Colonic mucosa (tissue), 4 donors: ENCODE measurements at regions of chr12 and their contacts with region 1.

Region 1: GRCh38 chr12:63802012-63802608 is 22.4 kb downstream of the RXYLT1 start:
- DNase-seq: no peak
- H3K4me3 ChIP-seq: no peak overlapping the region
- H3K27ac ChIP-seq: no peak overlapping the region
- H3K4me1 ChIP-seq: no peaks in the 10 kb centered on the region
- H3K27me3 ChIP-seq: no peaks in the 10 kb centered on the region
- CTCF ChIP-seq: peak; percentile 44

Region 2: DNA sequence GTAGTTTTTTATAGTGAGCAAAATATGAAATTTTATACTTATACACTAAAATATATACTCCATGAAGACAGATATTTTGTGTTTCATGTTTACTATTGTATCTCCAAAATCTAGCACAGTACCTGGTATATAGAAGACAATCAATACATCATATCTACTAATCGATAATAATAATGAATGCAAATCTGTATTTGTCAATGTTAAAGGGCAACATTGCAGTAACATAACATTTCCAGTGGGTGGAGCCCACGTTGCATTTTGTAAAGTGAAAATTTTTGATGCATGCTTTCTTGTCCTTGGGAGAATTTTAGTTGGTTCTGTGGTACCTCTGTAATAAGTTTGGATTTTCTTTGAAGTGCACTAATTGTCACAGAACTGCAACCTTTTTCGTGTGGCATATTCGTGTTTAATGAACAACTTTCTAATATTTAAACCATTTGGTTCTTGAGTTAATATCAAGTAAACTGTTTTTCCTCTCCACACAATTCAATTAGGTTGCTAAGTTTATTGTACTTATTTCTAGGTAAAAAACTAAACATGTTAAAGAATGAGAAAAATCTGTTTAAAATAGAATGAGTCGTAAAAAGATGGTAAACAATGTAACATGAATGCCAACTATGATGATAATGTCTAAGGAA is 698.5 kb before region 1 on chr12:
- intact Hi-C with region 1: loop called (anchors 10 kb)
- DNase-seq: no peak
- H3K4me3 ChIP-seq: no peak overlapping the region
- H3K27ac ChIP-seq: no peak overlapping the region
- H3K4me1 ChIP-seq: no peaks in the 10 kb centered on the region
- H3K27me3 ChIP-seq: no peaks in the 10 kb centered on the region
- CTCF ChIP-seq: peak; percentile 74

Region 3: GRCh38 chr12:63668028-63668799 is 133.9 kb before region 1 on chr12 and contains the start of gene DPY19L2:
- intact Hi-C with region 1: loop called (anchors 10 kb)
- DNase-seq: peak; percentile 69
- H3K4me3 ChIP-seq: peak within 1 kb of the TSS; percentile 58
- H3K27ac ChIP-seq: no peak within 1 kb of the TSS
- H3K4me1 ChIP-seq: no peaks in the 10 kb centered on the region
- H3K27me3 ChIP-seq: no peaks in the 10 kb centered on the region
- CTCF ChIP-seq: no peak
- total RNA-seq, gene DPY19L2: 1.3 to 1.9 TPM